ENCODE measurements at regions of chr17 and their contacts with region 1.

Region 1: DNA sequence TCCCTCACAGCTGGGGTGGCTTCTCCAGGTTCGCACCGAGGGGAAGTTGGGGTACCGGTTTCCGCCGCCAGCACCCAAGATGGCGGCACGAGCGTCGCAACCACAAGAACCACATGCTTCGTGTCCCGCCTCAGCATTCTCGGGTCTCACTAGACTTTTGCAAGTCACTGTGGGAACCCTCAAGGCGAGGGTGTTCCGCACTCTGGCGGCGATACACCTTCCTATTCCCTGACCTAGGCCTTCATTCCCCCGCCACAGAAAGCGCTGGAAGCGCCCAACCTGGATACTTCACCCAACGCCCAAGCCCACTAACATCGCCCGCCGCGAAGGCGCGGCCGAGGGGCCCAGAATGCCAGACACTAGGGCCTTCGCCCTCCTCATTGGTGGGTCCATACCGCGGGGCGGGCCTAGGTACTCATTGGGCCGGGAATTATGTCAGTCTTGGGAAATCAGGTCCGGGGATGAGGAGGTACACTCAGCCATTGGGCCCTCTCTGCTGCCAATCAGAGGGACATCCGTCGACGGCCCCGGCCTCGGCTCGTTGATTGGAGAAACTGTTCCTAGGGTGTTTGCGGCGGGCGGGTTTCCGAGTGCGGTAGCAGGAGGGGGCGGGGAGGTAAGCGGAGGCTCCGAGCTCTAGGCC is at the start of gene NFE2L1:
- DNase-seq: peak; percentile 99
- H3K4me3 Mint-ChIP-seq: peak within 1 kb of the TSS; percentile 97
- H3K27ac Mint-ChIP-seq: peak within 1 kb of the TSS; percentile 94
- H3K4me1 Mint-ChIP-seq: peaks cover 57% of the 10 kb centered on the region
- H3K27me3 Mint-ChIP-seq: no peaks in the 10 kb centered on the region
- total RNA-seq, gene NFE2L1: 53.2 to 65.9 TPM

Region 2: GRCh38 chr17:48004983-48005382 is 42.9 kb before region 1 on chr17:
- CTCF ChIA-PET with region 1: no interaction called
- POLR2A ChIA-PET with region 1: no interaction called
- DNase-seq: no peak
- H3K4me3 Mint-ChIP-seq: no peak overlapping the region
- H3K27ac Mint-ChIP-seq: no peak overlapping the region
- H3K4me1 Mint-ChIP-seq: peaks cover 10% of the 10 kb centered on the region
- H3K27me3 Mint-ChIP-seq: peaks cover 39% of the 10 kb centered on the region

Region 3: GRCh38 chr17:48030531-48030930 is 17.3 kb before region 1 on chr17:
- CTCF ChIA-PET with region 1: interaction called, 39 read pairs
- POLR2A ChIA-PET with region 1: interaction called, 6 read pairs
- DNase-seq: no peak
- H3K4me3 Mint-ChIP-seq: no peak overlapping the region
- H3K27ac Mint-ChIP-seq: no peak overlapping the region
- H3K4me1 Mint-ChIP-seq: peaks cover 12% of the 10 kb centered on the region
- H3K27me3 Mint-ChIP-seq: peaks cover 29% of the 10 kb centered on the region

Region 4: GRCh38 chr17:48058393-48059124 is 10.7 kb after region 1 on chr17:
- CTCF ChIA-PET with region 1: interaction called, 16 read pairs
- POLR2A ChIA-PET with region 1: interaction called, 3 read pairs
- DNase-seq: no peak
- H3K4me3 Mint-ChIP-seq: no peak overlapping the region
- H3K27ac Mint-ChIP-seq: peak overlapping the region; percentile 11
- H3K4me1 Mint-ChIP-seq: peaks cover 25% of the 10 kb centered on the region
- H3K27me3 Mint-ChIP-seq: no peaks in the 10 kb centered on the region

Region 5: GRCh38 chr17:48131216-48131824 is 83.5 kb after region 1 on chr17:
- CTCF ChIA-PET with region 1: no interaction called
- POLR2A ChIA-PET with region 1: no interaction called
- DNase-seq: peak; percentile 75
- H3K4me3 Mint-ChIP-seq: no peak overlapping the region
- H3K27ac Mint-ChIP-seq: peak overlapping the region; percentile 69
- H3K4me1 Mint-ChIP-seq: no peaks in the 10 kb centered on the region
- H3K27me3 Mint-ChIP-seq: no peaks in the 10 kb centered on the region